ENCODE measurements at regions of chr5 and their contacts with region 1.

Region 1: DNA sequence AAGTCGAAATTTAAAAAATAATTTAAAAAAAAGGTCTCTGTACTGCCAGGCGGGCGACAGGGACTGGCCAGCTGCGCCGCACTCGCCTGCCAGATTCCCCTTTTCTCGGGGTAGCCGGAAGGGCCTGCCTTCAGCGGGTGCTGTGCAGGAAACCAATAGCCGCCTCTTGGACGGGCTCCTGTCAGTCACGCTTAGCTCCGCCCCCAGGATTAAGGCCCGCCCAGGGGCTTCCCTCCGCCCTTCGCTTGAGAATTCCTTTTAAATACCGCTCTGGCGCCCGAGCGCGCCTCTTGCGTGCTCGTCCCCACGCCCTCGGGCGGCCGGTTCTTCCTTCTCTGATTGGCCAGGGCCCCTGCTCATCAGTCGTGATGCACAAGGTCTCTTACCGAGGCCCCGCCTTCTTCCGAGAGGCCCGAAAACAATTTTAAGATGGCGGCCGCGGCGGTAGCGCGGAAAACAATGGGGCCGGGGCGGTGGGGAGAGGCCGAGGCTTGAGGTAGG is at the start of gene MAML1:
- DNase-seq: peak; percentile 98 to 100 (median 99)
- ATAC-seq: peak; percentile 92
- H3K4me3 ChIP-seq: peak within 1 kb of the TSS; percentile 86
- H3K4me3 Mint-ChIP-seq: peak within 1 kb of the TSS; percentile 99
- H3K27ac ChIP-seq: peak within 1 kb of the TSS; percentile 67 to 84
- H3K27ac Mint-ChIP-seq: peak within 1 kb of the TSS; percentile 84
- H3K4me1 ChIP-seq: peaks cover 42% of the 10 kb centered on the region
- H3K4me1 Mint-ChIP-seq: peaks cover 47% of the 10 kb centered on the region
- H3K27me3 ChIP-seq: no peaks in the 10 kb centered on the region
- H3K27me3 Mint-ChIP-seq: no peaks in the 10 kb centered on the region
- CTCF ChIP-seq: no peak
- total RNA-seq, gene MAML1: 21.8 to 22.2 TPM

Region 2: GRCh38 chr5:179550511-179551230 is 181.8 kb before region 1 on chr5 and contains the start of gene RUFY1:
- CTCF ChIA-PET with region 1: no interaction called
- POLR2A ChIA-PET with region 1: interaction called, 10 read pairs
- intact Hi-C with region 1: no loop called
- DNase-seq: peak; percentile 63 to 91 (median 79)
- ATAC-seq: peak; percentile 76
- H3K4me3 ChIP-seq: peak within 1 kb of the TSS; percentile 91
- H3K4me3 Mint-ChIP-seq: peak within 1 kb of the TSS; percentile 99
- H3K27ac ChIP-seq: peak within 1 kb of the TSS; percentile 74 to 77
- H3K27ac Mint-ChIP-seq: peak within 1 kb of the TSS; percentile 97
- H3K4me1 ChIP-seq: peaks cover 37% of the 10 kb centered on the region
- H3K4me1 Mint-ChIP-seq: peaks cover 37% of the 10 kb centered on the region
- H3K27me3 ChIP-seq: no peaks in the 10 kb centered on the region
- H3K27me3 Mint-ChIP-seq: no peaks in the 10 kb centered on the region
- CTCF ChIP-seq: no peak
- total RNA-seq, gene RUFY1: 19.5 to 21.8 TPM

Region 3: GRCh38 chr5:179623003-179623880 is 109.2 kb before region 1 on chr5 and contains the start of gene HNRNPH1:
- CTCF ChIA-PET with region 1: no interaction called
- POLR2A ChIA-PET with region 1: interaction called, 52 read pairs
- intact Hi-C with region 1: loop called in 1 of 2 experiments (anchors 5 kb)
- DNase-seq: peak; percentile 95 to 99 (median 99)
- ATAC-seq: peak; percentile 74
- H3K4me3 ChIP-seq: peak within 1 kb of the TSS; percentile 86
- H3K4me3 Mint-ChIP-seq: peak within 1 kb of the TSS; percentile 99
- H3K27ac ChIP-seq: peak within 1 kb of the TSS; percentile 95 to 99
- H3K27ac Mint-ChIP-seq: peak within 1 kb of the TSS; percentile 100
- H3K4me1 ChIP-seq: peaks cover 38% of the 10 kb centered on the region
- H3K4me1 Mint-ChIP-seq: peaks cover 55% of the 10 kb centered on the region
- H3K27me3 ChIP-seq: no peaks in the 10 kb centered on the region
- H3K27me3 Mint-ChIP-seq: peaks cover 8% of the 10 kb centered on the region
- CTCF ChIP-seq: no peak
- total RNA-seq, gene HNRNPH1: 2,404 to 2,435 TPM

Region 4: DNA sequence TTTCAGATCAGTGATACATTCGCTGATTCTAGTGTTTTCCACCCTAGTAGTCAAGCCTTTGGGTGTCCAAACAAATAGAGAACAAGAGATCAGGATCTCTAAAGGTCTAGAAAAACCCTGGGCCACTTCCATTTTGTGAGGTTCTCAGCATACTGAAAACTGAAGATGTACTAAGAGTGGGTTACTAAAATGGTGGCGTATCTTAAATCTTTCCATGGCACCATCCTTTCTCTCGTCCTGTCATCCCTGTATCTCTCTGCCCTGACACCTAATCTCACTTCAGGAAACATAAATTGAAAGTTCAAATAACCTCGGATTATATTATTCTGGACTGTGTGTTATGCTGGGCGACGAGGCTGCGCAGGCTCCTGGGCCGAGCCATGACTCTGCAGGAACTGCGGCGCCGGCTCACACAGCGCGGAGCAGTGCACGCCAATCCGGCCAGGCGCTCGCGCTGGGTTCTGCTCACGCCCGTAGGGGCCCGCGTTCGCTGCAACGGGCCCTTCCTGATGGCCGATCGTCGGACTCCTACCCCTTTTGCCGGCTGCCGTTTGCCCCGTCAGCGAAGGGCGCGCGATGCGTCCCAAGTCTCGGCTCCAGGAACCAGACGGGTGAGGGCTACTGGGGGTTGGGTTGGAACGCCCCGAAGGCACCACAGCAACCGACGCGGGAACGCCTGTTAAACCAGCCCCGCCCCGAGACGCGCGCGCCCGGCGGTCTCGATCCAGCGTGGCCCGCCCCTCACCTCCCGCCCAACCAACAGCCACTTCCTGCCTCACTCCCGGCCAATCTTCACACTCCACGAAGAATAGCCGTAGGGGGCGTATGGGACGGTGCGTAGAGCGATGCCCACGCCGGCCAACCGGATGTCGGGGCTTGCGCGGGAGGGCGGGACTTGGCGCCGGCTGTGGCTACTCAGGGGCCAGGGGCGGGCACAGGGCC is 34.2 kb before region 1 on chr5:
- CTCF ChIA-PET with region 1: no interaction called
- POLR2A ChIA-PET with region 1: interaction called, 23 read pairs
- intact Hi-C with region 1: loop called (anchors 1 kb)
- DNase-seq: peak; percentile 97 to 100 (median 98)
- ATAC-seq: peak; percentile 86
- H3K4me3 ChIP-seq: peak overlapping the region; percentile 93
- H3K4me3 Mint-ChIP-seq: peak overlapping the region; percentile 95
- H3K27ac ChIP-seq: peak overlapping the region; percentile 83 to 94
- H3K27ac Mint-ChIP-seq: peak overlapping the region; percentile 98
- H3K4me1 ChIP-seq: peaks cover 49% of the 10 kb centered on the region
- H3K4me1 Mint-ChIP-seq: peaks cover 47% of the 10 kb centered on the region
- H3K27me3 ChIP-seq: no peaks in the 10 kb centered on the region
- H3K27me3 Mint-ChIP-seq: no peaks in the 10 kb centered on the region
- CTCF ChIP-seq: no peak

Region 5: GRCh38 chr5:179795863-179796833 is 63.7 kb after region 1 on chr5:
- CTCF ChIA-PET with region 1: interaction called, 3 read pairs
- POLR2A ChIA-PET with region 1: interaction called, 6 read pairs
- intact Hi-C with region 1: loop called in 1 of 2 experiments (anchors 2 kb)
- DNase-seq: peak; percentile 53 to 89 (median 69)
- ATAC-seq: peak; percentile 70
- H3K4me3 ChIP-seq: peak overlapping the region; percentile 43
- H3K4me3 Mint-ChIP-seq: peak overlapping the region; percentile 83
- H3K27ac ChIP-seq: peak overlapping the region in 1 of 2 donors; percentile 13
- H3K27ac Mint-ChIP-seq: peak overlapping the region; percentile 44
- H3K4me1 ChIP-seq: peaks cover 38% of the 10 kb centered on the region
- H3K4me1 Mint-ChIP-seq: peaks cover 40% of the 10 kb centered on the region
- H3K27me3 ChIP-seq: no peaks in the 10 kb centered on the region
- H3K27me3 Mint-ChIP-seq: no peaks in the 10 kb centered on the region
- CTCF ChIP-seq: peak; percentile 74

Region 6: GRCh38 chr5:179907570-179908324 is 175.3 kb after region 1 on chr5 and contains the start of gene TBC1D9B:
- CTCF ChIA-PET with region 1: no interaction called
- POLR2A ChIA-PET with region 1: interaction called, 3 read pairs
- intact Hi-C with region 1: loop called in 1 of 2 experiments (anchors 5 kb)
- DNase-seq: peak; percentile 45 to 93 (median 64)
- ATAC-seq: peak; percentile 90
- H3K4me3 ChIP-seq: peak within 1 kb of the TSS; percentile 60
- H3K4me3 Mint-ChIP-seq: peak within 1 kb of the TSS; percentile 95
- H3K27ac ChIP-seq: no peak within 1 kb of the TSS
- H3K27ac Mint-ChIP-seq: peak within 1 kb of the TSS; percentile 82
- H3K4me1 ChIP-seq: peaks cover 25% of the 10 kb centered on the region
- H3K4me1 Mint-ChIP-seq: peaks cover 23% of the 10 kb centered on the region
- H3K27me3 ChIP-seq: no peaks in the 10 kb centered on the region
- H3K27me3 Mint-ChIP-seq: no peaks in the 10 kb centered on the region
- CTCF ChIP-seq: peak; percentile 17
- total RNA-seq, gene TBC1D9B: 67.5 to 71.8 TPM